ENCODE measurements at regions of chr7 and their contacts with region 1.

Region 1: GRCh38 chr7:23013715-23014649 is at the start of gene HYCC1:
- DNase-seq: peak; percentile 99 to 100 (median 100)
- H3K4me3 ChIP-seq: peak within 1 kb of the TSS; percentile 55 to 76
- H3K4me3 Mint-ChIP-seq: peak within 1 kb of the TSS; percentile 94 to 99 (median 97)
- H3K27ac ChIP-seq: peak within 1 kb of the TSS; percentile 58
- H3K27ac Mint-ChIP-seq: peak within 1 kb of the TSS; percentile 88 to 99 (median 93)
- H3K4me1 ChIP-seq: peaks cover 49% of the 10 kb centered on the region
- H3K4me1 Mint-ChIP-seq: peaks cover 12 to 28% (median 24%) of the 10 kb centered on the region in 4 donors
- H3K27me3 ChIP-seq: no peaks in the 10 kb centered on the region
- H3K27me3 Mint-ChIP-seq: peaks cover 0 to 2% of the 10 kb centered on the region in 2 donors
- total RNA-seq, gene HYCC1: 16.2 to 19.6 TPM

Region 2: GRCh38 chr7:21427182-21427870 is 1586.7 kb before region 1 on chr7:
- CTCF ChIA-PET with region 1: no interaction called
- POLR2A ChIA-PET with region 1: no interaction called
- intact Hi-C with region 1: loop called (anchors 1 kb)
- DNase-seq: peak; percentile 99 to 100 (median 100)
- H3K4me3 ChIP-seq: peak overlapping the region; percentile 93
- H3K4me3 Mint-ChIP-seq: peak overlapping the region; percentile 95 to 100 (median 99)
- H3K27ac ChIP-seq: peak overlapping the region; percentile 93
- H3K27ac Mint-ChIP-seq: peak overlapping the region; percentile 98 to 100 (median 99)
- H3K4me1 ChIP-seq: peaks cover 49% of the 10 kb centered on the region
- H3K4me1 Mint-ChIP-seq: peaks cover 30 to 56% (median 43%) of the 10 kb centered on the region in 4 donors
- H3K27me3 ChIP-seq: no peaks in the 10 kb centered on the region
- H3K27me3 Mint-ChIP-seq: no peaks in the 10 kb centered on the region

Region 3: GRCh38 chr7:22822486-22823141 is 191.4 kb before region 1 on chr7 and contains the start of gene TOMM7:
- CTCF ChIA-PET with region 1: no interaction called
- POLR2A ChIA-PET with region 1: interaction called, 4 read pairs
- intact Hi-C with region 1: loop called (anchors 1 kb)
- DNase-seq: peak; percentile 84 to 92 (median 91)
- H3K4me3 ChIP-seq: peak within 1 kb of the TSS; percentile 83 to 98
- H3K4me3 Mint-ChIP-seq: peak within 1 kb of the TSS; percentile 94 to 99 (median 98)
- H3K27ac ChIP-seq: peak within 1 kb of the TSS; percentile 85
- H3K27ac Mint-ChIP-seq: peak within 1 kb of the TSS; percentile 94 to 100 (median 98)
- H3K4me1 ChIP-seq: peaks cover 40% of the 10 kb centered on the region
- H3K4me1 Mint-ChIP-seq: peaks cover 19 to 50% (median 33%) of the 10 kb centered on the region in 4 donors
- H3K27me3 ChIP-seq: no peaks in the 10 kb centered on the region
- H3K27me3 Mint-ChIP-seq: peaks cover 5 to 17% of the 10 kb centered on the region in 2 donors
- total RNA-seq, gene TOMM7: 686 to 701 TPM

Region 4: GRCh38 chr7:22980422-22980821 is 33.6 kb before region 1 on chr7:
- CTCF ChIA-PET with region 1: no interaction called
- POLR2A ChIA-PET with region 1: no interaction called
- intact Hi-C with region 1: no loop called
- DNase-seq: no peak
- H3K4me3 ChIP-seq: no peak overlapping the region
- H3K4me3 Mint-ChIP-seq: no peak overlapping the region
- H3K27ac ChIP-seq: no peak overlapping the region
- H3K27ac Mint-ChIP-seq: no peak overlapping the region
- H3K4me1 ChIP-seq: no peaks in the 10 kb centered on the region
- H3K4me1 Mint-ChIP-seq: no peaks in the 10 kb centered on the region
- H3K27me3 ChIP-seq: no peaks in the 10 kb centered on the region
- H3K27me3 Mint-ChIP-seq: no peaks in the 10 kb centered on the region

Region 5: DNA sequence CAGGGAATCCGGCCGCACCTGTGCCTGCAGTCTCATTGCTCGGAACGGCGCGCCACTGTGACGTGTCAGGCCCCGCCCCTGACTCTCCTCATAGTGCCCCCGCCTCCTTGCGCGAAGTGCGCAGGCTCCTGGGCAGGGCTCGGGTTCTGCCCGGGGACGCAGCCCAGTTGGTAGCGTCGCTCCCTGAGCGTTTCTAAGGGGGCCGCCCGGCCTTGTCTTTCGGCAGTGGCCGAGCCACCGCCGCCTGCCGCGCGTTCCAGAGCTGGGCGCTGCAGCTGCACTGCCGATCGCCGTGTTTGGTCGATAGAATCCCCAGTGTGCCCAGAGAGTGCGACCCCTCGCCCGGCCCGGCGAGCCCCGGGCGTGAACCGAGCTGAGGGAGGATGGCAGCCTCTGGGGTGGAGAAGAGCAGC is 91.7 kb after region 1 on chr7 and contains the start of gene KLHL7:
- CTCF ChIA-PET with region 1: no interaction called
- POLR2A ChIA-PET with region 1: interaction called, 3 read pairs
- intact Hi-C with region 1: loop called (anchors 1 kb)
- DNase-seq: peak; percentile 91 to 96 (median 93)
- H3K4me3 ChIP-seq: peak within 1 kb of the TSS; percentile 83 to 98
- H3K4me3 Mint-ChIP-seq: peak within 1 kb of the TSS; percentile 93 to 99 (median 97)
- H3K27ac ChIP-seq: peak within 1 kb of the TSS; percentile 89
- H3K27ac Mint-ChIP-seq: peak within 1 kb of the TSS; percentile 93 to 98 (median 96)
- H3K4me1 ChIP-seq: peaks cover 39% of the 10 kb centered on the region
- H3K4me1 Mint-ChIP-seq: peaks cover 28 to 56% (median 38%) of the 10 kb centered on the region in 4 donors
- H3K27me3 ChIP-seq: no peaks in the 10 kb centered on the region
- H3K27me3 Mint-ChIP-seq: no peaks in the 10 kb centered on the region
- total RNA-seq, gene KLHL7: 22.5 to 25.6 TPM

Region 6: GRCh38 chr7:23474094-23474828 is 460.3 kb after region 1 on chr7:
- CTCF ChIA-PET with region 1: no interaction called
- POLR2A ChIA-PET with region 1: no interaction called
- intact Hi-C with region 1: loop called (anchors 5 kb)
- DNase-seq: peak in 4 of 5 donors; percentile 26 to 34 (median 28)
- H3K4me3 ChIP-seq: peak overlapping the region in 1 of 2 donors; percentile 3
- H3K4me3 Mint-ChIP-seq: peak overlapping the region in 6 of 8 donors; percentile 34 to 65 (median 58)
- H3K27ac ChIP-seq: no peak overlapping the region
- H3K27ac Mint-ChIP-seq: peak overlapping the region in 3 of 7 donors; percentile 70 to 88 (median 76)
- H3K4me1 ChIP-seq: peaks cover 37% of the 10 kb centered on the region
- H3K4me1 Mint-ChIP-seq: peaks cover 9 to 33% (median 21%) of the 10 kb centered on the region in 4 donors
- H3K27me3 ChIP-seq: peaks cover 81% of the 10 kb centered on the region
- H3K27me3 Mint-ChIP-seq: peaks cover 47 to 62% of the 10 kb centered on the region in 2 donors

Region 7: DNA sequence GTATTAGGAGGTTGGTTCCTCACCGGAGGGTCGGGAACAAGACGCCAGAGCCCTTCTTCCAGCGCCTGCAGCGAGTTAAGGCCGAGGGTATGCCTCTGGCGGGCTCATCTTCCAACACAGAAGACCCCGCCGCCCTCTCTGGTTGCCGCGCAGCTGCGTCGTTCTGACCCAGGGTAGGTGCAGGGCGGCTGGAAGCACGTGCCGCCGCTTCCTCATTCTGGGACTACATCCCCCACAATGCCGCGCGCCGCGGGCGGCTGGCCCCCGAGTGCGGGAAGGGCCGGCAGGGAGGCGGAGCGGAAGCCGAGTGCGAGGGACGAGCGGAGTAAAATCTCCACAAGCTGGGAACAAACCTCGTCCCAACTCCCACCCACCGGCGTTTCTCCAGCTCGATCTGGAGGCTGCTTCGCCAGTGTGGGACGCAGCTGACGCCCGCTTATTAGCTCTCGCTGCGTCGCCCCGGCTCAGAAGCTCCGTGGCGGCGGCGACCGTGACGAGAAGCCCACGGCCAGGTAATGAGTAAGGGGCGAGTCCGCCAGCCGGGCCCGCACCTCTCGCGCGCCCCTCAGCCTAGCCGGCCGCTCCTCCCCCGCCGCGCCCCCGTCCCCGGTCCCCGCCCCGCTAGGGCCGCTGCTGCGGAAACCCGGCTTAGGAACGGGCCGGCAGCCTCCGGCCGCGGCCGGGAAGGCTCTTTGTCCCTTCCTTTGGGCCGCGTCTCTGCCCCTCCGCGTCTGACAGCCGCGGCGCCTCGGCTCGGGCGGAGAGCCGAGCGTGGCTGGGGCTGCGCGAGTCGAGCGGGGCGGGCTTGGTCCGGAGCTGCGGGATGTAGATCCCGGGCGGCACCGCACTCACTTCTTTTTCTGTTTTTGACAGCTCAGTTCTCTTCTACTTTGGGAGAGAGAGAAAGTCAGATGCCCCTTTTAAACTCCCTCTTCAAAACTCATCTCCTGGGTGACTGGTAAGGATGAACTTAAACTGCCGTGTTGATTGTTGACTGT is 583.4 kb after region 1 on chr7 and contains the start of gene CCDC126:
- CTCF ChIA-PET with region 1: no interaction called
- POLR2A ChIA-PET with region 1: no interaction called
- intact Hi-C with region 1: loop called (anchors 10 kb)
- DNase-seq: peak; percentile 73 to 80 (median 74)
- H3K4me3 ChIP-seq: peak within 1 kb of the TSS; percentile 61 to 67
- H3K4me3 Mint-ChIP-seq: peak within 1 kb of the TSS; percentile 86 to 96 (median 92)
- H3K27ac ChIP-seq: peak within 1 kb of the TSS; percentile 79
- H3K27ac Mint-ChIP-seq: peak within 1 kb of the TSS; percentile 47 to 91 (median 88)
- H3K4me1 ChIP-seq: peaks cover 19% of the 10 kb centered on the region
- H3K4me1 Mint-ChIP-seq: peaks cover 21 to 40% (median 35%) of the 10 kb centered on the region in 4 donors
- H3K27me3 ChIP-seq: no peaks in the 10 kb centered on the region
- H3K27me3 Mint-ChIP-seq: no peaks in the 10 kb centered on the region
- total RNA-seq, gene CCDC126: 15.5 to 17.7 TPM